ENCODE measurements at regions of chr2 and their contacts with region 1.

Region 1: DNA sequence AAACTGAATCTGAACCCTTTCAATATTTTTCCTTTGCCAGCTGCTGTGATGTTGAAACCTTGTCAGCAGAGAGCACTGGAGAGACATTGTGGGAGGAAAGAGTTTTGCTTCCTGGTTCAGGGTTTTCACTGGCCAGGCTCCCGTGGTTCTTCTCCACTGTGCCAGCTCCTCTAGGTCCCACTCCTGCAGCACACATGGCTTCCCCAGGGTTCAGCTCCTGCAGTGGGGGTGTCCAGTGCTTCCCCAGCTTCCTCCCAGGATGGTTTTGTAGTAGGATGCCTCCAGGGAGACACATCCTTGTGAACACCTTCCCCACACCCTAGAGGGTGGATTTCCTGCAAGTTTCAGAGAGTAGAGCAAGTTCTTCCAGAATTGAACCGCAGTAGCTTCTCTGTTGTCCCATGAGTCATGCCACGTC is 24.0 kb upstream of the SULT1C3 start:
- DNase-seq: peak; percentile 79
- ATAC-seq: peak; percentile 90
- H3K4me3 ChIP-seq: peak overlapping the region; percentile 56
- H3K27ac ChIP-seq: peak overlapping the region; percentile 65
- H3K4me1 ChIP-seq: peaks cover 19% of the 10 kb centered on the region
- H3K27me3 ChIP-seq: no peaks in the 10 kb centered on the region
- CTCF ChIP-seq: peak; percentile 78

Region 2: DNA sequence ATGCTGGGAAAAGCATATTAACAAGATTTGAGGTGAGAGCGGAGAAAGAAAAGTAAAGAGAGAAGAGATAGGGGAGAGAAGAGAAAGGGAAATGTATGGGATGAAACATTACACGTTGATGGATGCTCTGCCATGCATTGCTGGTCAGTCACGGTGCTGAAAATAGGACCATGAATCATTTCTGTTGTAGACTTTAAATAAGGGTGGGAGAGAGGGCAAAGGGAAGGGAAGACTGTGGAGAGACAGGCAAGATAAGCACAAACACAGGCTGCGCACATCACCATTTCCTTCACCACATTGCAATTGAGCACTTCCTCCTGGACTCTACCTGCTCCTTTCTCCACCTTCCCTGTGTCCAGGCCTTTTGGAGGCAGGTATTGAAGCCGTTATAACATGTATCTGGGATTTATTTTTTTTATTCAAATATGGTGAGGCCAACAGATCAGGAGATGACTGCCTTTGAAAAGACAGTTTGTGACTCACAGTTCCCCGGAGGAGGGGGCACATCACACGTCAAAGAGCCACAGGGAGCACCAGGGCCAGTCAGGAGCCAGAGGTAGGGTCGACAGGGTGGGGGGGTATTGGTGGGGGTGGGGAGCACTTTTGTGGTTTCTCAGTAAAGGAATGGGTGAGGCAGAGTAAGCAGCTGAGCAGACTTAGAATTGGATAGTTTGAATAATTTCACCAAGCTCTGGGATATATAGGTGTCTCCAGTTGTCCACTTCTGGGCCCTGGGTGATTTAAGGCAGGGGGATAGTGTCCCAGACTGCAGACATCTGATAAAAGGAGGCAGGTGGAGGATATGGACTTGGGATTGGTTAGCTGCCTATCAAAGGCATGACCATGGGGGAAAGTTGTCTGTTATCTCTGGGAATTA is 957.0 kb before region 1 on chr2:
- CTCF ChIA-PET with region 1: no interaction called
- POLR2A ChIA-PET with region 1: no interaction called
- intact Hi-C with region 1: no loop called
- DNase-seq: no peak
- ATAC-seq: no peak
- H3K4me3 ChIP-seq: no peak overlapping the region
- H3K27ac ChIP-seq: no peak overlapping the region
- H3K4me1 ChIP-seq: no peaks in the 10 kb centered on the region
- H3K27me3 ChIP-seq: peaks cover 77% of the 10 kb centered on the region
- CTCF ChIP-seq: no peak

Region 3: GRCh38 chr2:108271691-108272253 is 56.0 kb after region 1 on chr2:
- CTCF ChIA-PET with region 1: no interaction called
- POLR2A ChIA-PET with region 1: no interaction called
- intact Hi-C with region 1: loop called (anchors 5 kb)
- DNase-seq: peak; percentile 86
- ATAC-seq: peak; percentile 78
- H3K4me3 ChIP-seq: peak overlapping the region; percentile 60
- H3K27ac ChIP-seq: peak overlapping the region; percentile 73
- H3K4me1 ChIP-seq: peaks cover 37% of the 10 kb centered on the region
- H3K27me3 ChIP-seq: no peaks in the 10 kb centered on the region
- CTCF ChIP-seq: no peak

Region 4: GRCh38 chr2:108351889-108352288 is 136.1 kb after region 1 on chr2:
- CTCF ChIA-PET with region 1: no interaction called
- POLR2A ChIA-PET with region 1: no interaction called
- intact Hi-C with region 1: loop called (anchors 1 kb)
- DNase-seq: no peak
- ATAC-seq: no peak
- H3K4me3 ChIP-seq: no peak overlapping the region
- H3K27ac ChIP-seq: no peak overlapping the region
- H3K4me1 ChIP-seq: no peaks in the 10 kb centered on the region
- H3K27me3 ChIP-seq: no peaks in the 10 kb centered on the region
- CTCF ChIP-seq: no peak

Region 5: DNA sequence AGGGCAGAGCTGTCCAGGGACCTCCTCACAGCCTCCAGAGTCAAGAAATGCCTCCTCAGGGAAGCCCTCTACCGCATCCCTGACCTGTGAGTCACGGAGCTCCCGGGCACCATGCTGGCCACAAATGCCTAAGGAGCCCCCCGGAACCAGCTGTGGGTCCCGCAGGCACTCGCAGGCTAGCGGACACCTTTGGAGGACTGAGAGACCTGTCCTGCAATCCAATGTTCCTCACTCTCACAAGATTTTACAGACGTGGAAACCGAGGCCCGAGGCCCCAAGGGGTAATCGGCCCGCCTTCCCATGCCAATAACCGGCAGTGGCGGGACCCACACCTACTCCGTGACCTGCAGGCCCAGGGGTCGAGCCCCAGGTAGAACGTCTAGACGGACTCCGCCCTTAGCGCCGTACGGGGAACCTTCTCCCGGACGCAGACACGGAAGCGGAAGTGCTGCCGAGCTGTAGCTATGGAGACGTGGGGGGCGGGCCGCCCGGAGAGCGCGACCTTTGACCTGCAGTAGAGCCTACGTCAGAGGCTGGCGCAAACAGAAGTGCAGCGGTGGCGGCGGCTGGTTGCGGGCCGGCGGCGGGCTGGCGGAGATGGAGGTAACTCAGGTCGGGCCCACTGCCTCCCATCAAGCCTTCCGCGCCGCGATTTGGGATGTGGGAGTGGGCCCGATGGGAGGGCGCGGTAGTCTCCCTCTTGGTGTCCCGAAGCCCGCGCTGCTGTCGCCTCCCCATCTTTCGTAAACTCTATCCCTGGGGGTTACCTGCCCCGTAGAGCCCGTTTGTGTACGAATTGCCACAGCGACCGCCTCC is 233.1 kb after region 1 on chr2 and contains the start of gene GCC2:
- CTCF ChIA-PET with region 1: no interaction called
- POLR2A ChIA-PET with region 1: no interaction called
- intact Hi-C with region 1: loop called (anchors 5 kb)
- DNase-seq: peak; percentile 94
- ATAC-seq: peak; percentile 97
- H3K4me3 ChIP-seq: peak within 1 kb of the TSS; percentile 97
- H3K27ac ChIP-seq: peak within 1 kb of the TSS; percentile 65
- H3K4me1 ChIP-seq: peaks cover 10% of the 10 kb centered on the region; the same call in 1 of the 2 replicates
- H3K27me3 ChIP-seq: no peaks in the 10 kb centered on the region
- CTCF ChIP-seq: no peak
- total RNA-seq, gene GCC2: 7.3 and 10.1 TPM in 2 replicates

Region 6: GRCh38 chr2:108477099-108477498 is 261.3 kb after region 1 on chr2:
- CTCF ChIA-PET with region 1: no interaction called
- POLR2A ChIA-PET with region 1: no interaction called
- intact Hi-C with region 1: loop called (anchors 10 kb)
- DNase-seq: no peak
- ATAC-seq: no peak
- H3K4me3 ChIP-seq: no peak overlapping the region
- H3K27ac ChIP-seq: no peak overlapping the region
- H3K4me1 ChIP-seq: no peaks in the 10 kb centered on the region
- H3K27me3 ChIP-seq: no peaks in the 10 kb centered on the region
- CTCF ChIP-seq: no peak

Region 7: DNA sequence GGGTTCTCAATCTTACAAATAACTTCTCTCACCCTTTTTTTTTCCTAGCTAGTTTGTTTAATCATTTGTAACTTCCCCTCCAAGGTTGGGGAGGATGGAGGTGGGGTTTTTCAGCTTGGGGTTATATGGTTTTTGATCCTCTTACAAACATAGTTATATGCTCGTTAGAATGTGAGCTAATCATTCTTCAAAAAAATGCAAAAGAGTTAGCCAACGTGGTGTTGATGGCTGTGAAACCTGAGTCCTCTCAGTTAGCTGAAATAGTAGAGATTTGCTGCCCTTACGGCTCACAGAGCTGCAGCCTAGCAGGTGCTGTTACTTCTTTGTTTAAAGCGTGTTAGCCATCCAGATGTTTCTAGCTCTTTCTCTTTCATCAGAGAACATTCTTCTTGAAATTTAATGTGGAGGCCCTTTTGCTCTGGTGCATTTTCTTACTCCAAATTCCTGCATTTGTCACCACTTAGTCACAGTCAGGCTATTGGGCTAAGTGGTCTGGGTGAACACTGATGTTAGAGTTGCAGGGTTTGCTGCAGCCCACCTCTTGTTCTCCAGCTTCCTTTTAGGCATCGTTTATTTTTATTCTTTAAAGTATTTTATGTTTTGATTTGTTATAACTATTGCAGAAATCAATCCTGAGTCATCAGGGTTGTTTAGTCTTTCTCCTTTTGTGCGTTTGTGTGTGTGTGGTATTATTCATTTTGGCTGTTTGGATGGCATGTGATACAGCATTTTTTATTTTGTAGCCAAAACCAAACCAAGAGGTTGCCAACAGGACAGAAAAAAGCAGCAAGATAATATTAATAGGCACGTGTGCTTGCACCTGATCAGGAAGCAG is 359.5 kb after region 1 on chr2:
- CTCF ChIA-PET with region 1: no interaction called
- POLR2A ChIA-PET with region 1: interaction called, 11 read pairs
- intact Hi-C with region 1: no loop called
- DNase-seq: peak; percentile 58
- ATAC-seq: no peak
- H3K4me3 ChIP-seq: no peak overlapping the region
- H3K27ac ChIP-seq: no peak overlapping the region
- H3K4me1 ChIP-seq: peaks cover 58% of the 10 kb centered on the region
- H3K27me3 ChIP-seq: no peaks in the 10 kb centered on the region
- CTCF ChIP-seq: no peak

Measured in PC-3 (cell line).